Activated T-helper 1 cell treated with anti-CD3 and anti-CD28 coated beads, Interleukin-12 subunit alpha, Interleukin-12 subunit beta, Interleukin-2, Interleukin-4 antibody, amounts not matched to agents 30 ng/mL and 10 ng/mL and 1 ng/mL, durations not matched to agents 14 hours and 24 hours and 36 hours (primary cell): ENCODE measurements at regions of chr16 and their contacts with region 1.

Region 1: DNA sequence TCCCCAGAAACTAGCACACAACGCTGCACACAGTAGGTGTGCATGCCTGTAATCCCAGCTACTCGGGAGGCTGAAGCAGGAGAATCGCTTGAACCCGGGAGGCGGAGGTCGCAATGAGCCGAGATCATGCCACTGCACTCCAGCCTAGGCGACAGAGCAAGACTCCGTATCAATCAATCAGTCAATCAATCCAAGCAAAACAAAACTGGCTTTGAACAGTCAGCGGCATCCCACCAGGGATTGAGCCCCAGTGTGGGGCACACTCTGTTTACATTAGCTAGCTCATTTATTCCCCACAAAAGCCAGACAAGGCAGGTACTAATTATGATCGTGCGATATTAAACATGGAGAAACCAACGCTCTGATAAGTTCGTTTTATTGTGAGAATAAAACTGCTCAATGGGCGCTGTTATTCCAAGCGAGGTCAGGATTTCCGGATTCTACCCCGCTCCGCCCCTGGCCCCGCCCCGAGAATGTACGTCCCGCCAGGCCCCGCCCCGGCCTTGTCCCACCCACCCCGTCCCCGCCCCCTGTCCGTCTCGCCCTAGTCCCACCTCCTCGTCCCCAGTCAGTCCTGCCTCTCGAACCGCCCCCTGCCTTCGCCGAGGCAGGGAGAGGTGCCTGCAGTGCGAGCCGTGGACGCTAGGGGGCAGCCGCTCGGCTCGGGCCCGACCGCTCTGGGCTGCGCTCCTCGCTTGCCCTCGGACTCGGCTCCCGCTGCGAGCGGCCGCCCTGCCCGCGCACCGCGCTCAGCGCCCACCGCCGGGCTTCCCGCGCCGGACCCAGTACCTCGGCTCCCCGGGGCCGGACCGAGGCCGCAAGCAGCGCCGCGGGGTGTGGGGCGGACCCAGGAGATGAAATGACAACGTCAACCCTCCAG is at the start of gene VPS4A:
- DNase-seq: peak; percentile 98
- H3K4me3 Mint-ChIP-seq: peak within 1 kb of the TSS; percentile 99
- H3K27ac Mint-ChIP-seq: peak within 1 kb of the TSS; percentile 96
- H3K4me1 Mint-ChIP-seq: peaks cover 23% of the 10 kb centered on the region
- H3K27me3 Mint-ChIP-seq: no peaks in the 10 kb centered on the region
- total RNA-seq, gene VPS4A: 37.9 and 42.4 TPM in 2 replicates

Region 2: GRCh38 chr16:68085259-68086071 is 1225.4 kb before region 1 on chr16 and contains the start of gene NFATC3:
- intact Hi-C with region 1: loop called (anchors 5 kb)
- DNase-seq: peak; percentile 97
- H3K4me3 Mint-ChIP-seq: peak within 1 kb of the TSS; percentile 95
- H3K27ac Mint-ChIP-seq: peak within 1 kb of the TSS; percentile 96
- H3K4me1 Mint-ChIP-seq: peaks cover 73% of the 10 kb centered on the region
- H3K27me3 Mint-ChIP-seq: no peaks in the 10 kb centered on the region
- total RNA-seq, gene NFATC3: 152 and 157 TPM in 2 replicates

Region 3: DNA sequence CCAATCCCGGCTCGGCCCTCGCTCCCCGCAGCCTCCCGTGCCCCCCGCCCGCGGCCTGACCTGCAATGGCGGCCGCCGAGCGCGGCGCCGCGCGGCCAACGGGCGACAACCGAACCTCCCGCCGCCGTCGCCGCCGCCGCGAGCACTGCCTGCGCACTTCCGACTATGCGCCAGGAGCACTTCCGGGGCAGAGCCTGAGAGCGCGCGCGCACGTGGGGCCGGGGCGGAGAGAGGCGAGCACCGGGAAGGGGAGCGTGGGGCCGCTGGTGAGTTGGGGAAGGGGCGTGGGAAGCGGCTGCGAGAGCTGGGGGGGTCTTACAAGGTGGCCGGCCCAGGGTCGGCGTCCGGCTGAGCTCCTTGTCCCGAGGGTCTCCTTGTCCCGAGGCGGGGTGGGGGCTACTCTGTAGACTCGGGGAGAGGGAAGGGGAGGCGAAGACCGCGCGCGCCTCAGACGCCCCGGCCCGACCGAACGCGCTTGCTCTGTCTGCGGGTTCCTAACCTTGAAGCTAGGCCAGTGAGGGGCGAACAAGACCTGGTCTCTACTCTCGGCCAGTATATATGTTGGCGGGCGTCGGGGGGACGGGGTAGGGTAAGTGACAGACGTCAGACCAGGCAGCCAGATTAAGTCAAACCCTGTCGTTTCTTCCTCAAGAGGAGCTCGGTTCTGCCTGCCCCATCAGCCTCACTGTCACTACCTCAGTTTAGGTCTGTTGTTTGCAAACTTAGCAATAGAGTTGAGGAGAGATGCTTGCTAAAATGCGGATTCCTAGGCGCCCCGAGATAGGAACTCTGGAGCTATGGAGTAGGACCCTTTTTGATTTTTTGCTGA is 178.3 kb before region 1 on chr16 and contains the starts of genes CHTF8 and UTP4:
- intact Hi-C with region 1: loop called (anchors 1 kb)
- DNase-seq: peak; percentile 88
- H3K4me3 Mint-ChIP-seq: peak within 1 kb of the TSS; percentile 97
- H3K27ac Mint-ChIP-seq: peak within 1 kb of the TSS; percentile 92
- H3K4me1 Mint-ChIP-seq: peaks cover 49% of the 10 kb centered on the region
- H3K27me3 Mint-ChIP-seq: no peaks in the 10 kb centered on the region
- total RNA-seq, gene CHTF8: 134 and 143 TPM in 2 replicates
- total RNA-seq, gene UTP4: 117 and 127 TPM in 2 replicates

Region 4: DNA sequence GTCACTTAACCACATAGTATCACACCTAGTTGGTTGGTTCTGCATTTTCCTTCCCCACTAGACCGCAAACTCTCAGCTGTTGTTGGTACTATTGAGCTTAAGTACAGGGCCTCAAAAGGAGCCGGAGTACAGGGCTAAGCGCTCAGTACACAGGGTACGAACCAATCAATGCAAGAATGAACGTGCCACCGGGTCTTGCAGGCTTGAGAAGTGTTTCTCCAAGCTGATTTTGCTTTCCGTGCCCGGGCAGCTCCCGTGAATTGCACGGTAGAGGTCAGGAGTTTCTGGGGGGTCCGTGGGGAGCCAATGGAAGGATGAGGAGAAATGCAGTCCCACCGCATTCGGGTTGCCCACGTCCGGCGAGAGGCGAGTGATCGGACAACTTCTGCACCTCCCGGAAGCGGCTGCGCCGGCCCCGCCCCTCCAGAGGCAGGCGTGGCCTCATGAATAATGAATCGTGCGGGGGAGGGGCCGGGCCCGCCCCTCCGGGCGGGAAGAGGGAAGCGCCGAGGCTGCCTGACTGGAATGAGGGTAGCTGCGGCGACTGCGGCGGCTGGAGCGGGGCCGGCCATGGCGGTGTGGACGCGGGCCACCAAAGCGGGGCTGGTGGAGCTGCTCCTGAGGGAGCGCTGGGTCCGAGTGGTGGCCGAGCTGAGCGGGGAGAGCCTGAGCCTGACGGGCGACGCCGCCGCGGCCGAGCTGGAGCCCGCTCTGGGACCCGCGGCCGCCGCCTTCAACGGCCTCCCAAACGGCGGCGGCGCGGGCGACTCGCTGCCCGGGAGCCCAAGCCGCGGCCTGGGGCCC is 124.0 kb before region 1 on chr16 and contains the start of gene SNTB2:
- intact Hi-C with region 1: loop called (anchors 1 kb)
- DNase-seq: peak; percentile 83
- H3K4me3 Mint-ChIP-seq: peak within 1 kb of the TSS; percentile 95
- H3K27ac Mint-ChIP-seq: peak within 1 kb of the TSS; percentile 97
- H3K4me1 Mint-ChIP-seq: peaks cover 57% of the 10 kb centered on the region
- H3K27me3 Mint-ChIP-seq: no peaks in the 10 kb centered on the region
- total RNA-seq, gene SNTB2: 27.9 and 29.4 TPM in 2 replicates

Region 5: DNA sequence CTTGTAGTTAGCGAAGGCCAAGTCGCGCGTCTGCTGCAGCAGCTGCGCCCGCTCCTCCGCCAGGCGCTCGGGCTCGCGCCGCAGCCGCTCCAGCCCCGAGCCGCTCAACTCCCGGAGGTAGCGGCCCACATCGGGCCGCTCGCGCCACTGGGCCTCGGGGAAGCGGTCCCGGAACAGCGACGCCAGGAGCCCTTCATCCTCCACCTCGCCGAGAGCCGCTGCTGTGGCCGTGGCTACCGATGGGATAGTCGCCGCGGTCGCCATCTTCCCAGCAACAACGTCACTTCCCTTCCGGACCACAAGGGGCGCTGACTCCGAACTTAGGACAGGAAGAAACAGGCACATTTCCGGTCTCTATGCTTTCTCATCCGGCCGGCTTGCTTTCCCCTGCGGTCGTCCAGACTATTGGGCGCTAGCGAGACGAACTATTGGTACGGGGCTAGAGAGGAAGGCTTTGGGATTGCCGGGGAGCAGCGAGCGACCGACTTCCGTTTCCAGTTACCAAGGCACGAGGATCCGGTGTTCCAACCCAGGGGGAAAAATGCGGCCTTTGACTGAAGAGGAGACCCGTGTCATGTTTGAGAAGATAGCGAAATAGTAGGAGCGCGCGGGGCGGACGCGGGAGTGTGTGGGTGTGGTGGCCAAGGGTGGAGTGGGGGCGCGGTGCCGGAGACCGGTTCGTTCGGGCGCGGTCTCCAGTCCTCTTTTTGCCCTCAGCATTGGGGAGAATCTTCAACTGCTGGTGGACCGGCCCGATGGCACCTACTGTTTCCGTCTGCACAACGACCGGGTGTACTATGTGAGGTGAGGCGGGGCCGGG is 28.6 kb after region 1 on chr16 and contains the starts of genes COG8 and NIP7:
- intact Hi-C with region 1: loop called (anchors 1 kb)
- DNase-seq: peak; percentile 91
- H3K4me3 Mint-ChIP-seq: peak within 1 kb of the TSS; percentile 99
- H3K27ac Mint-ChIP-seq: peak within 1 kb of the TSS; percentile 99
- H3K4me1 Mint-ChIP-seq: peaks cover 43% of the 10 kb centered on the region
- H3K27me3 Mint-ChIP-seq: no peaks in the 10 kb centered on the region
- total RNA-seq, gene COG8: 45.3 and 46.5 TPM in 2 replicates
- total RNA-seq, gene NIP7: 80.7 and 85.8 TPM in 2 replicates

Region 6: GRCh38 chr16:69448470-69449193 is 137.7 kb after region 1 on chr16:
- intact Hi-C with region 1: no loop called
- DNase-seq: no peak
- H3K4me3 Mint-ChIP-seq: no peak overlapping the region
- H3K27ac Mint-ChIP-seq: peak overlapping the region; percentile 9
- H3K4me1 Mint-ChIP-seq: peaks cover 48% of the 10 kb centered on the region
- H3K27me3 Mint-ChIP-seq: no peaks in the 10 kb centered on the region

Region 7: DNA sequence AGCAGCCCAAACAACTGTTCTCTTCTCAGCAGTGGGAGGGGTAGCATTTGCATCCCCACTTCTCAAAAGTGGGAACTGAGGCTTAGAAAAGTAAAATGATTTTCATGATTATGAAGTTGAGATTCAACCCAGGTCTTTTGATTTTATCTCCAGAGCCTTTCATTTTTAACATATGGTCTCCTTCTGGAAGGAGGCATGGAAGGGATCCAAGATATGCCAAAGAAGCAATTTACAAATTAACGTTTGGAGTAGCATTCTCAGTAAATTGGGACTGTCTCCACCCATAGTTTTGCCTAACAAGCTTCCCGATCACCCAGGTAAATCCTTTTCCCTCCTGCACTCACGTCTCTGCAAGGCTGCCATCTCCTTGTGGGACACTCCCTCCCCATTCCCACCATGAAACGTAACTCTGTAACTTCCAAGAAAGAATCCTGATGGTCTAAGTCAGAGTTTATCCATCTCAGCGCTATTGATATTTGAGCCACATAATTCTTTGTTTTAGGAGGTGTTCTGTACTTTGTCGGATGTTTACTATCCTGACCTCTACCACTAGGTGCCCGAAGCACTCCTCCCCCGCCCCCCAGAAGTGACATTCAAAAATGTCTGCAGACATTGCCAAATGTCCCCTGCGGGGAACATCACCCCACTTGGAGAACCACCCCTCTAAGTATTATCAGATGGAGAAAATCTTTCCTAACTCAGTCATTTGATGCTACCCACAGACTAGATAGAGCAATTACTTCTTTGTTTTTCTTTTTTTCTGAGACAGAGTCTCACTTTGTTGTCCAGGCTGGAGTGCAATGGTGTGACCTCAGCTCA is 222.0 kb after region 1 on chr16:
- intact Hi-C with region 1: no loop called
- DNase-seq: no peak
- H3K4me3 Mint-ChIP-seq: no peak overlapping the region
- H3K27ac Mint-ChIP-seq: no peak overlapping the region
- H3K4me1 Mint-ChIP-seq: peaks cover 33% of the 10 kb centered on the region
- H3K27me3 Mint-ChIP-seq: no peaks in the 10 kb centered on the region

Region 8: GRCh38 chr16:69754469-69755310 is 443.8 kb after region 1 on chr16 and contains the start of gene NOB1:
- intact Hi-C with region 1: loop called (anchors 1 kb)
- DNase-seq: peak; percentile 97
- H3K4me3 Mint-ChIP-seq: peak within 1 kb of the TSS; percentile 99
- H3K27ac Mint-ChIP-seq: peak within 1 kb of the TSS; percentile 98
- H3K4me1 Mint-ChIP-seq: peaks cover 32% of the 10 kb centered on the region
- H3K27me3 Mint-ChIP-seq: peaks cover 2% of the 10 kb centered on the region
- total RNA-seq, gene NOB1: 132 and 133 TPM in 2 replicates